ENCODE measurements at regions of chr12 and their contacts with region 1.

Region 1: DNA sequence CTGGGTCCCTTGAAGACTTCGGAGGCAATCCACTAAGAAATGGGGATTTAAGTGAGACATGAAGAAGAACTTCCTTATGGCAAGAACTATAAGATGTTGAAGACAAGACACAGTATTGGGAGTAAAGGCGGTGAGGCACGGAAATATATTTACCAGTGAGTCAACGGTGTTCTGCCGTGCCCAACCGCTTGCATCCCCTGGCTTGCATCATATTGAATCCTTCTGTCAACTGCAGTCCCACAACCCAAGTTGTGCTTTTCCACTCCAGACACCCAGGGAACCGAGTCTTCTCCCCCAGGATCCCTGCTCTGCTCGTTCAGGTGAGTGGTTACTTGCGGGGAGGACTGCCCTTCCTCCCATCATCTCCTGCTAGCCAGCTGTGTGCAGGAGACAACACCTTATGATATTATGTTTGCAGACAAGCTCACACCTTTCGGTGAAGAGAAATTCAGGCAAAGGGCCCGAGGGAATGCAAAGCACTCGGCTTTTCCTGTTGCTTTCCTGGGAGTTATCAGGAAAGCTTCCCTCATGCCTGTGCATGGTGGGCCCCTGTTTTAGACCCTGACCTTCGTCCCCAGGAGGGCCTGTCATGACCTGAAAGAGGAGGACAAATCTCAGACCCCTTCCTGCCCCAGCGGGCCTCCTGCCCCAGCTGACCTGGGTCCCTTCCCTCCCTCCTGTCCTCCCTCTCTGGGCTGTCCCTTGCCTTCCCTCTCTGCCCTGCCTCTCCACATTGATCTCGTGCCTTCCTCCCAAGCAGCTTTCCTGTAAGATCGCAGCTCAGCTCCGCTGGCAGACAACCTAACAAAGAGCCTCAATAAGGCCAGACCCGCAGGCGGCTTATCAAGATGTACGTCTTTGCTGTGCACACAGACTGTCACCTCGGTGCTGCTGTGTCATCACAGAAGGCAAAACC is 4.3 kb upstream of the LRTM2 start:
- DNase-seq: no peak
- ATAC-seq: no peak
- H3K4me3 ChIP-seq: no peak overlapping the region
- H3K27ac ChIP-seq: no peak overlapping the region
- H3K4me1 ChIP-seq: peaks cover 0 to 40% (median 0%) of the 10 kb centered on the region in 9 donors
- H3K27me3 ChIP-seq: peaks cover 0 to 49% (median 25%) of the 10 kb centered on the region in 7 donors
- CTCF ChIP-seq: no peak

Region 2: DNA sequence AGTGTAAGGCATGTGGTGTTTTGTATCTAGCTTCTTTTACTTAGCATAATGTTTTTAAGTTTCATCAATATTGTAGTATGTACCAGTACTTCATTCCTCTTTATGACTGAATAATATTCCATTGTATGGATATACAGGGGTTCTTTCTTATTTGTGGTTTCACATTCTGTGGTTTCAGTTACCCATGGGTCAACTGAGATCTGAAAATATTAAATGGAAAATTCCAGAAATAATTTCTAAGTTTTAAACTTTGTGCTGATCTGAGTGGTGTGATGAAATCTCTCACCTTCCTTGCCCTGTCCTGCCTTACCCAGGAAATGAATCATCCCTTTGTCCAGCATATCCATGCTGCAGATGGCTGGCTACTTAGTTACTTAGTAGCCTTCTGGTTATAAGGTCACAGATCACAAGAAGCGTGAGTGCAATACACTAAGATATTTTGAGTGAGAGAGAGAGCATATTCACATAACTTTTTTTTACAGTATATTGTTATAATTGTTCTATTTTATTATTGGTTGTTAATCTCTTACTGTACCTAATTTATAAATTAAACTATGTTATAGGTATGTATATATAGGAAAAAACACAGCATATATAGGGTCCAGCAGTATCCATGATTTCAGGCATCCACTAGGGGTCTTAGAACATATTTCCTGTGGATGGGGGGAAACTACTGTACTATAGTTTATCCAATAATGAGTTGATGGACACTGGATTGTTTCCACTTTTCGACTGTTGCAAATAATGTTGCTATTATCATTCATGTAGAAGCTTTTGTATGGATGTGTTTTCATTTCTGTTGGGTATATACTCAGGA is 55.3 kb before region 1 on chr12:
- intact Hi-C with region 1: no loop called
- DNase-seq: no peak
- ATAC-seq: peak in 2 of 8 donors; percentile 52 to 79
- H3K4me3 ChIP-seq: no peak overlapping the region
- H3K27ac ChIP-seq: no peak overlapping the region
- H3K4me1 ChIP-seq: peaks cover 0 to 16% (median 5%) of the 10 kb centered on the region in 9 donors
- H3K27me3 ChIP-seq: no peaks in the 10 kb centered on the region
- CTCF ChIP-seq: no peak

Region 3: DNA sequence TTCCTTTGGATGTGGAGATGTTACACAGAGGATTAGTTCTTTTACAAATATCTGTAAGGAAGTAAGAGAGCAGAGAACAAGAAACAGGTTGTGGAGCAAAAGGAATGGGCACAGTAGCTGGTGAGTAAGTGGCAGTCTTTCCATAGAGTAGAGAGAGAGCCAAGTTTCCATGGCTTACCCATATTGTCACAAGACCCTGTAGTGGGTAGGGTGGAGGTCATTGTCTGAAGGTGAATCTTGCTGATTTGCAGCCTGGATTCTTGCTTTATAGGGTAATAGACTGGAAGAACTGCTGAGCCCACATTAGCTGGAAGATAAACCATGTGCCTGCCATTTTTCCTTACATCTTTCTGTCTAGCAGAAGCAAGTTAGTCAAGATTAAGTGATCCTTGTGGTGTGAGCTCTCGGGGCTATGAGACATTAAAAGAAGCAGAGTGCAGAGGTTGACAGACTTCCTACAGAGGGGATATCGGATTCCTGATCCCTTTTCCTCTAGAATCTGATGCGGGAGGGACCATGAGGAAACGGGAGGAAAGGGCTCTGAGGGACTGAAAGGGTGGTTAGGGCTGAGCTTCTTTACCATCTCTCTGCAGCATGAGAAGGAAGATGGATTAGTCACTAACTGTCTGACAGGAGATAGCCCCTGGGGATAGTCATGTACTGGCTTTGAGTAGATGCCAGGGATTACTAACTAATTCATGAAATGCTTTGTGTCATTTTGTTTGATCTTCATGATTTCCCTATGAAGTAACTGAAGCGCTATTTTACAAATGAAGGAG is 39.7 kb before region 1 on chr12:
- intact Hi-C with region 1: no loop called
- DNase-seq: no peak
- ATAC-seq: peak in 5 of 8 donors; percentile 32 to 74 (median 52)
- H3K4me3 ChIP-seq: no peak overlapping the region
- H3K27ac ChIP-seq: no peak overlapping the region
- H3K4me1 ChIP-seq: peaks cover 0 to 61% (median 37%) of the 10 kb centered on the region in 9 donors
- H3K27me3 ChIP-seq: no peaks in the 10 kb centered on the region
- CTCF ChIP-seq: no peak

Region 4: DNA sequence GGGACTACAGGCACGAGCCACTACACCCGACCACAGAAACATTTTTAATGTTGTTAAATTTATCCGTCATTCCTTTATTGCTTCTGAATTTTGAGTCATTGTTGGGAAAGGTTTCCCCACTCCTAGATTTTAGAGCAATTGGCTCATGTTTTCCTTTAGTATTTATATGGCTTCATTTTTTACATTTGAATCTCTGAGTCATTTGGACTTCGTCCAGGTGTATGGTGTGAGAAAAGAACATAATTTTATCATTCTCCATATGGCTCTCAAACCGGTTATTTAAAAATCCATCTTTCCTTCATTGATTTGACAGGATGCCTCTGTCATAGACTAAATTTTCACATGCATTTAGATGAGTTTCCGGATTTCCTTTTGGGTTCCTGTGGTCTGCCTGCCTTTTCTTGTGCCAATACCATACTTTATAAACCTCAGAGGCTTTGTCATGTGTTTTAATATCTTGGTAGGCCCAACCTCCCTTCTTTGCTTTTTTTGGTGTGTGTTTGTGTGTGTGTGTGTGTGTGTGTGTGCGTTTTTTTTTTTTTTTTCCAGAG is 35.2 kb after region 1 on chr12:
- intact Hi-C with region 1: no loop called
- DNase-seq: no peak
- ATAC-seq: no peak
- H3K4me3 ChIP-seq: no peak overlapping the region
- H3K27ac ChIP-seq: no peak overlapping the region
- H3K4me1 ChIP-seq: no peaks in the 10 kb centered on the region
- H3K27me3 ChIP-seq: peaks cover 0 to 5% (median 0%) of the 10 kb centered on the region in 7 donors
- CTCF ChIP-seq: no peak

Region 5: DNA sequence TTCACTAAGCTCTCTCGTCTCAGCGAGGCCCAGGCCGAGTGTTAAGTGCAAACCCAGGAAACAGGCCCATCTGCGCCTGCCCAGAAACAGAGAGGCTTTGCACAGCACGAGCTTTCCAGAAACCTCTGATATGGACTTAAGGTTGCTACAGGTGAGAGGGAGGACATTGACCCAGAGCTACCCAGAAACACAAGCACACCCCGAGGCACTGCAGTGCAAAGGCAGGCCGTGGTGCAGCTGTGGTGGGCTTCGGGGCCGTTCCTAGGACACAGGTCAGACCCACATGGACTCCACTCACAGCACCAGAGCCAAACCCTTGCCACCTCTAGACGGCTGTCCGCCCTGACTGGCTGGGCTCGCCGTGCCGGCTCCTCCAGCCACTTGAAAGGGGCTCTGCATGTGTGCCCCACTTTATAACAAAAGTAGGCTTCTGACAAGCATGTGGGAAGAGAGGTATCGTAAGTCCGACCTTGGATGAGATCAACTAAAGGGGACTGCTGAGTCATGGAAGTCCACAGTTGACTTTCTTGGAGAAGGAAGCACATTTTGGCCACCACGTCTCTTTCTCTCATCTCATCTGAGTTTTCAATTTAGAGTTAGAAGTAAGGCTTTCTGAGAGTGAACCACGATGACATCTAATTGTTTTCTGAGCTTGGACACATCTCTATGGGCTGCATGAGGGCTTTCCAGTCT is 64.2 kb after region 1 on chr12:
- intact Hi-C with region 1: loop called in 1 of 10 experiments (anchors 2 kb)
- DNase-seq: no peak
- ATAC-seq: peak in 1 of 8 donors; percentile 39
- H3K4me3 ChIP-seq: no peak overlapping the region
- H3K27ac ChIP-seq: no peak overlapping the region
- H3K4me1 ChIP-seq: no peaks in the 10 kb centered on the region
- H3K27me3 ChIP-seq: peaks cover 0 to 19% (median 0%) of the 10 kb centered on the region in 7 donors
- CTCF ChIP-seq: no peak